ENCODE measurements at regions of chr15 and their contacts with region 1.

Region 1: GRCh38 chr15:84929744-84930371 is 45.4 kb downstream of the SLC28A1 start:
- H3K4me3 ChIP-seq: no peak overlapping the region
- H3K27ac ChIP-seq: no peak overlapping the region
- H3K4me1 ChIP-seq: no peaks in the 10 kb centered on the region
- CTCF ChIP-seq: no peak

Region 2: GRCh38 chr15:84755736-84756527 is 173.9 kb before region 1 on chr15:
- CTCF ChIA-PET with region 1: no interaction called
- POLR2A ChIA-PET with region 1: no interaction called
- H3K4me3 ChIP-seq: no peak overlapping the region
- H3K27ac ChIP-seq: no peak overlapping the region
- H3K4me1 ChIP-seq: peaks cover 16% of the 10 kb centered on the region
- CTCF ChIP-seq: no peak

Region 3: GRCh38 chr15:84826369-84826823 is 103.5 kb before region 1 on chr15:
- CTCF ChIA-PET with region 1: interaction called, 14 read pairs
- POLR2A ChIA-PET with region 1: no interaction called
- H3K4me3 ChIP-seq: no peak overlapping the region
- H3K27ac ChIP-seq: no peak overlapping the region
- H3K4me1 ChIP-seq: no peaks in the 10 kb centered on the region
- CTCF ChIP-seq: 0 out of 2 replicates have a peak, but pooled peaks have one; percentile 31

Region 4: GRCh38 chr15:84863565-84864443 is 66.1 kb before region 1 on chr15:
- CTCF ChIA-PET with region 1: interaction called, 10 read pairs
- POLR2A ChIA-PET with region 1: no interaction called
- H3K4me3 ChIP-seq: no peak overlapping the region
- H3K27ac ChIP-seq: no peak overlapping the region
- H3K4me1 ChIP-seq: no peaks in the 10 kb centered on the region
- CTCF ChIP-seq: no peak

Region 5: GRCh38 chr15:84883916-84884768 is 45.7 kb before region 1 on chr15 and contains the start of gene SLC28A1:
- CTCF ChIA-PET with region 1: interaction called, 17 read pairs
- POLR2A ChIA-PET with region 1: no interaction called
- H3K4me3 ChIP-seq: no peak within 1 kb of the TSS
- H3K27ac ChIP-seq: no peak within 1 kb of the TSS
- H3K4me1 ChIP-seq: no peaks in the 10 kb centered on the region
- CTCF ChIP-seq: no peak

Region 6: GRCh38 chr15:85044251-85044853 is 114.5 kb after region 1 on chr15:
- CTCF ChIA-PET with region 1: interaction called, 12 read pairs
- POLR2A ChIA-PET with region 1: no interaction called
- H3K4me3 ChIP-seq: no peak overlapping the region
- H3K27ac ChIP-seq: no peak overlapping the region
- H3K4me1 ChIP-seq: peaks cover 17% of the 10 kb centered on the region
- CTCF ChIP-seq: peak; percentile 51; the same call in 1 of the 2 replicates